Ascending aorta (tissue), 2 donors: ENCODE measurements at regions of chr5 and their contacts with region 1.

Region 1: DNA sequence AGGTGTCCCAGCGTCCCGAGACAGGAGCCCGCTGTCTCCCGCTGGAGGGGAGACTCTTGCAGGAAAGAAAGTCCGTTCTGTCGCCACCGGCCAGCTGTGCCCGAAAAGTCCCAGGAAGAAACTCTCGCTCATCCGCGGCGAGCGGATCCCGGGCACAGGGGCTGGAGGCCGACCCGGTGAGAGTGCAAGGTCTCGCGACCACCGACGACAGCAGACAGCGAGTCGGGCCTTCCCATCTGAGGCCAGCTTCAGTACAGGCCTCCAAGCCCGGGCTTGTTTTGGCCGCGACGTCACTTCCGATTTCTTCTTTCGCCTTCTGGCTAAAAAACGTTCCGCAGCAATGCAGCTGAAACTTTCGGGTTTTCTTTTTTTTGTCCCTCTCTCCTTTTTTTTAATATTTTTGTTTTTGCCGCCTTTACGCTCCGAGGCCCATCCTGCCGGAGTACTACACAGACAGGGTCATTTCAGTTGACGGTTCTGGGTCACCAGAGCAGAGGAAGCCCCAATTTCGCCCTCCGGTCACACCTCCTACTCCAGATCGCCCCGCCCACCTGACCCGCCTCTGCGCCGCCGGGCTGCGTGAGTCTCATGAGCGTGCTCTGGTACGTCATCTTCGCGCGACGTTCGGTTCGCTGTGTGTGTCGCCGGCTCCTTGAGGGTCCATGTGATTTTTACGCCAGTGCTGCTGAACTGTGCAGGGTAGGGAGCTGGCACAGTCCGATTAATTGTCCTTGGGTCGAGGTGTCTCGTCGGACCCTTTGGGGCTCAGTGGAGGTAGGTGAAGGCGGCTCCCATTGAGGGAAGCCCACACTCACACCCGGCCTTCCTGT is at the starts of genes ANKRA2 and UTP15:
- DNase-seq: peak; percentile 94 to 99
- H3K4me3 ChIP-seq: peak within 1 kb of the TSS; percentile 76 to 86
- H3K27ac ChIP-seq: peak within 1 kb of the TSS; percentile 90 to 94
- H3K4me1 ChIP-seq: peaks cover 0 to 19% of the 10 kb centered on the region in 2 donors
- H3K27me3 ChIP-seq: no peaks in the 10 kb centered on the region
- CTCF ChIP-seq: no peak
- total RNA-seq, gene ANKRA2: 6.9 TPM
- total RNA-seq, gene UTP15: 4.9 TPM

Region 2: GRCh38 chr5:73498057-73499008 is 67.0 kb before region 1 on chr5 and contains the start of gene BTF3:
- intact Hi-C with region 1: loop called (anchors 1 kb)
- DNase-seq: peak; percentile 85 to 98
- H3K4me3 ChIP-seq: peak within 1 kb of the TSS; percentile 89 to 98
- H3K27ac ChIP-seq: peak within 1 kb of the TSS; percentile 92 to 97
- H3K4me1 ChIP-seq: peaks cover 3 to 22% of the 10 kb centered on the region in 2 donors
- H3K27me3 ChIP-seq: no peaks in the 10 kb centered on the region
- CTCF ChIP-seq: no peak
- total RNA-seq, gene BTF3: 235 TPM

Region 3: DNA sequence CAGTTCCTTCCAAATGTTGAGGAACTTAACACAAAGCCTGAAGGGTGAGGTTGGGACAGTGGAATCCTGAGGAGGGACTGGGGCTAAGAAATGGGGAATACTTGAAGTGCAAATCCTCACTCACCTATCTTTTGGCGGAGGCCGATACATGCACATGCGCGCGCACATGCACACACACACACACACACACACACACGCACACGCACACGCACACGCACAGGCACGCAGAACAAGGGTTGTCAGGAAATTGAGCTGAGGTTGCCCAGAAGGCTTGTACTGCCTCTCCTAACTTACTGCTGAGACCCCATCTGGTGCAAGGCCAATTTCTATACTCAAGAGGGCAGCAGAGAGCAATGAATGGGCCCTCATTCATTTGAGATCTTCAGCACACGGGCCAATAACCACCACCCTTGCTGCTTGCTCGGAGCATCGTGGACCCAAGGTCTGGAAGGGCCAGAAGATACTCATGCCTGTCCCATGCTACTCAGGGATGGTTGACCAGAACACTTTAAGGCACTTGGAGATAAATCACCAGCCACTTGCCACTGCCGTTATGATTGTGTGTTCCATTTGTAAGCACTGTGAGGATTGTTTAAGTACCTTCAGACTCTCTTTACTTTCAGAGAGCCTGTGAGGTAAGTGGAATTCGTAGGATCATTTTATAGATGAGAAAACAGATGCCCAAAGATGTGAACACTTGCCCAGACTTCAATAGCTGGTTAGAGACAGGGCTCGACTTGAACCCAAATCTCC is 45.6 kb before region 1 on chr5:
- intact Hi-C with region 1: loop called (anchors 2 kb)
- DNase-seq: peak in 1 of 2 donors; percentile 85
- H3K4me3 ChIP-seq: no peak overlapping the region
- H3K27ac ChIP-seq: no peak overlapping the region
- H3K4me1 ChIP-seq: peaks cover 0 to 3% of the 10 kb centered on the region in 2 donors
- H3K27me3 ChIP-seq: no peaks in the 10 kb centered on the region
- CTCF ChIP-seq: peak; percentile 67 to 72 (median 67)

Region 4: DNA sequence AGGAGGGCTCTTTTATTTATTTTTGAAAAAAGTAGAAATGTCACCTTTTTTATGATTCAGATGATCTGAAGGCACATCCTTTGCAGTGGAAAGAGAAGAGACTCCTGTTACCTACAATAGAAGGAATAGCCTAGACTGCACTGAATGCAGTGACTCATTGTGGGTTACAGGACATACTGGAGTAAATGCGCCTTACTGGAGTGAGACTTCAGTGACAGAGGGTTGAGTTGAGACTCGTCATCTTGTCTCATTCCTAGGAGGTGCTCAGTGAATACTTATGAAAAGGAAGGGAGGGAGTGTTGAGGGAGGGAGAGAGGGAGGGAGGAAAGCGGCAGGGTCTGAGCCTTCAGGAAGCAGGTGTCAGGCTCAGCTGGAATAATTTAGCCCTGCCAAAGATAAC is 25.2 kb before region 1 on chr5:
- intact Hi-C with region 1: loop called (anchors 2 kb)
- DNase-seq: no peak
- H3K4me3 ChIP-seq: no peak overlapping the region
- H3K27ac ChIP-seq: no peak overlapping the region
- H3K4me1 ChIP-seq: peaks cover 11 to 22% of the 10 kb centered on the region in 2 donors
- H3K27me3 ChIP-seq: no peaks in the 10 kb centered on the region
- CTCF ChIP-seq: no peak